Activated naive CD8-positive, alpha-beta T cell treated with anti-CD3 and anti-CD28 coated beads, Interleukin-2, amount 10 ng/mL, durations not matched to agents 7 days and 5 days (primary cell): ENCODE measurements at regions of chr17 and their contacts with region 1.

Region 1: GRCh38 chr17:47188876-47189731 is at the start of gene CDC27:
- DNase-seq: peak; percentile 98
- ATAC-seq: peak; percentile 94
- H3K4me3 Mint-ChIP-seq: peak within 1 kb of the TSS; percentile 95
- H3K27ac Mint-ChIP-seq: peak within 1 kb of the TSS; percentile 96
- H3K4me1 Mint-ChIP-seq: peaks cover 46% of the 10 kb centered on the region
- H3K27me3 Mint-ChIP-seq: no peaks in the 10 kb centered on the region
- total RNA-seq, gene CDC27: 113 to 114 TPM

Region 2: GRCh38 chr17:47199627-47200324 is 10.7 kb after region 1 on chr17:
- POLR2A ChIA-PET with region 1: interaction called, 37 read pairs
- DNase-seq: no peak
- ATAC-seq: no peak
- H3K4me3 Mint-ChIP-seq: peak overlapping the region; percentile 31
- H3K27ac Mint-ChIP-seq: peak overlapping the region; percentile 82
- H3K4me1 Mint-ChIP-seq: peaks cover 29% of the 10 kb centered on the region
- H3K27me3 Mint-ChIP-seq: peaks cover 9% of the 10 kb centered on the region

Region 3: GRCh38 chr17:47205419-47205963 is 16.4 kb after region 1 on chr17:
- POLR2A ChIA-PET with region 1: interaction called, 37 read pairs
- DNase-seq: no peak
- ATAC-seq: peak; percentile 74
- H3K4me3 Mint-ChIP-seq: peak overlapping the region; percentile 53
- H3K27ac Mint-ChIP-seq: peak overlapping the region; percentile 89
- H3K4me1 Mint-ChIP-seq: peaks cover 47% of the 10 kb centered on the region
- H3K27me3 Mint-ChIP-seq: no peaks in the 10 kb centered on the region

Region 4: GRCh38 chr17:47265983-47266541 is 77.0 kb after region 1 on chr17:
- POLR2A ChIA-PET with region 1: no interaction called
- DNase-seq: no peak
- ATAC-seq: no peak
- H3K4me3 Mint-ChIP-seq: no peak overlapping the region
- H3K27ac Mint-ChIP-seq: no peak overlapping the region
- H3K4me1 Mint-ChIP-seq: no peaks in the 10 kb centered on the region
- H3K27me3 Mint-ChIP-seq: peaks cover 17% of the 10 kb centered on the region